Heart left ventricle (tissue), 16 donors: ENCODE measurements at regions of chr13 and their contacts with region 1.

Region 1: GRCh38 chr13:73708393-73708985 is 425.7 kb downstream of the KLF12 start:
- DNase-seq: peak in 1 of 5 donors; percentile 24
- ATAC-seq: peak in 3 of 4 donors; percentile 64 to 72 (median 71)
- H3K4me3 ChIP-seq: no peak overlapping the region
- H3K27ac ChIP-seq: no peak overlapping the region
- H3K4me1 ChIP-seq: no peaks in the 10 kb centered on the region
- H3K27me3 ChIP-seq: no peaks in the 10 kb centered on the region
- CTCF ChIP-seq: peak; percentile 54 to 81 (median 72)
- POLR2A ChIP-seq: no peak

Region 2: DNA sequence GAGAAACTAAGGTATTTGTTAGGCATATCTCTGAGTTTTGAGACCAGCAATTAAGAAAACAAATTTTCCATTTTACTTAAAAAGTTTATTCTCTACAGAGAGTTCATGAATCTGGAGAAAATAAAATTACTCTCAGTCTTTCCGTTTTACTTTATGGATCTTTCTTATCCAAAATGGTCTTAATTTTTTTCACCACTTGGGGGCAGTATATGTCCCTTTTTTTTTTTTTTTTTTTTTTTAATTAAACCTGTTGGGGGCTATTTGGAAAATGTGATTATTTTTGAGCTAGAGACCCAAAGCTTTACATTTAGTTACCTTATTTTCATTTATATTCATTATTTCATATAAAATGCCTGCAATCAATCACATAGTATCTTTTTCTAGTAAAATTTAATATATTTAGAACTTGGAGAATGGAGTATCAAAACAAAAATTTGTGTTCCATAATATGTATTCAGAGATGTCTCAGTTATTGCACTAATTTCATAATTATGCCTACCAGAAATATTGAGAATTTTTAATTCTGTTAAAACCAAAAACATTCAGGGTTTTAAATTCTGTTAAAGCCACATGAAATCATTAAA is 899.5 kb before region 1 on chr13:
- intact Hi-C with region 1: loop called in 2 of 10 experiments (anchors 10 kb)
- DNase-seq: no peak
- ATAC-seq: no peak
- H3K4me3 ChIP-seq: no peak overlapping the region
- H3K27ac ChIP-seq: no peak overlapping the region
- H3K4me1 ChIP-seq: no peaks in the 10 kb centered on the region
- H3K27me3 ChIP-seq: no peaks in the 10 kb centered on the region
- CTCF ChIP-seq: peak; percentile 45 to 78 (median 70)
- POLR2A ChIP-seq: no peak

Region 3: GRCh38 chr13:72839831-72840426 is 868.6 kb before region 1 on chr13:
- intact Hi-C with region 1: loop called in 6 of 10 experiments (anchors 2 to 10 kb)
- DNase-seq: peak in 1 of 5 donors; percentile 35
- ATAC-seq: peak; percentile 10 to 69 (median 61)
- H3K4me3 ChIP-seq: no peak overlapping the region
- H3K27ac ChIP-seq: no peak overlapping the region
- H3K4me1 ChIP-seq: no peaks in the 10 kb centered on the region
- H3K27me3 ChIP-seq: no peaks in the 10 kb centered on the region
- CTCF ChIP-seq: peak; percentile 39 to 66 (median 50)
- POLR2A ChIP-seq: no peak

Region 4: GRCh38 chr13:73058736-73059459 is 649.6 kb before region 1 on chr13 and contains the start of gene KLF5:
- intact Hi-C with region 1: loop called in 6 of 10 experiments (anchors 2 to 10 kb)
- DNase-seq: peak; percentile 95 to 98 (median 96)
- ATAC-seq: peak; percentile 98 to 100 (median 99)
- H3K4me3 ChIP-seq: peak within 1 kb of the TSS; percentile 32 to 89 (median 74)
- H3K27ac ChIP-seq: peak within 1 kb of the TSS in 11 of 12 donors; percentile 21 to 76 (median 58)
- H3K4me1 ChIP-seq: peaks cover 0 to 22% (median 5%) of the 10 kb centered on the region in 12 donors
- H3K27me3 ChIP-seq: peaks cover 0 to 27% (median 12%) of the 10 kb centered on the region in 9 donors
- CTCF ChIP-seq: peak in 1 of 12 donors; percentile 6
- POLR2A ChIP-seq: peak; percentile 27 to 98
- total RNA-seq, gene KLF5: 0.64 to 6.9 (median 3.8) TPM